Vagina (tissue), 2 donors: ENCODE measurements at regions of chr9 and their contacts with region 1.

Region 1: GRCh38 chr9:137406876-137407589 is 15.9 kb downstream of the EXD3 start:
- DNase-seq: no peak
- H3K4me3 ChIP-seq: peak overlapping the region; percentile 39 to 53
- H3K27ac ChIP-seq: peak overlapping the region; percentile 51
- H3K4me1 ChIP-seq: peaks cover 33% of the 10 kb centered on the region
- H3K27me3 ChIP-seq: no peaks in the 10 kb centered on the region
- CTCF ChIP-seq: peak; percentile 45 to 69 (median 51)
- POLR2A ChIP-seq: no peak

Region 2: DNA sequence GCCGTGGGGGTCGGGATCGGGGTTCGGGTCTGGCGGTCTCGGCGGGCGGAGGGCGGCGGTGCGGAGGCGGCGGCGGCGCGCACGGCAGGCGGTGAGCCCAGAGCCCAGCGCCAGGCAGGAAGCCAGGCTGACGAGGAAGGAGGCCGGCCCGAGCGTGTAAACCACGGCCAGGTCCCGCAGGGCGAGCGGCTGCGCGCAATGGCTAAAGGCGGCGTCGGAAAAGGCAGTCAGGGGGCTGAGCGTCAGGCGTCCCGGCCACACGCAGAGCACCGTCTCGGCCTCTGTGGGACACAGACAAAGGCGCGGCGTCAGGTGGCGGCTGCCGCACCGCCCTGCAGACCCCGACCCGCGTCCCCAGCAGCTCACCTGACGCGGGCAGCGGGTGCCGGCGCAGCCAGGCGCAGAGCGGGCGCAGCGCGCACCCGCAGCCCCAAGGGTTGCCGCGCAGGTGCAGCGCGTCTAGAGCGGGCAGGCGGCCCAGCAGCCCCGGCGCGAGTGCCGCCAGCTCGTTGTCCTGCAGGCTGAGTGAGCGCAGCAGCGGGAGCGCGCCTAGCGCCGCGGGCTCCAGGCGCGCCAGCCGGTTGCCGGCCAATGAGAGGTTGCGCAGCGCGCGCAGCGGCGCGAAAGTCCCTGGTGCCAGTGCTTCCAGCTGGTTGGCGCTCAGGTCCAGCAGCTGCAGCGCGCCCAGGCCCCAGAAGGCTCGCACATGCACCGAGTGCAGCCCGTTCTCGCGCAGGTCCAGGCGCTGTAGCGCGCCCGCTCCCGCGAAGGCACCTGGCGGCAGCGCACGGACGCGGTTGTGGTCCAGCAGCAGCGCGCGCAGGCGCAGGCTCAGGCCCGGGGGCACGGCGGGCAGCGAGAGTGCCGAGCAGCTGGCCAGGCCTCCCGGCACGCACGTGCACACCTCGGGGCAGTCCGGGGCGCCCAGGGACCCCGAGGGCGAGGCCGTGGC is 237.9 kb before region 1 on chr9:
- intact Hi-C with region 1: loop called (anchors 10 kb)
- DNase-seq: no peak
- H3K4me3 ChIP-seq: peak overlapping the region; percentile 23 to 48
- H3K27ac ChIP-seq: no peak overlapping the region
- H3K4me1 ChIP-seq: peaks cover 27% of the 10 kb centered on the region
- H3K27me3 ChIP-seq: peaks cover 37% of the 10 kb centered on the region
- CTCF ChIP-seq: no peak
- POLR2A ChIP-seq: no peak

Region 3: GRCh38 chr9:137295238-137295811 is 111.7 kb before region 1 on chr9:
- intact Hi-C with region 1: loop called (anchors 5 kb)
- DNase-seq: no peak
- H3K4me3 ChIP-seq: peak overlapping the region; percentile 34 to 56
- H3K27ac ChIP-seq: peak overlapping the region; percentile 53
- H3K4me1 ChIP-seq: peaks cover 37% of the 10 kb centered on the region
- H3K27me3 ChIP-seq: peaks cover 8% of the 10 kb centered on the region
- CTCF ChIP-seq: no peak
- POLR2A ChIP-seq: no peak